Aorta (tissue), 5 donors: ENCODE measurements at regions of chr13 and their contacts with region 1.

Region 1: GRCh38 chr13:114226699-114227323 is 7.9 kb upstream of the CDC16 start:
- DNase-seq: peak; percentile 89 to 94
- ATAC-seq: peak; percentile 94
- H3K4me3 ChIP-seq: no peak overlapping the region
- H3K27ac ChIP-seq: no peak overlapping the region
- H3K4me1 ChIP-seq: no peaks in the 10 kb centered on the region
- H3K27me3 ChIP-seq: no peaks in the 10 kb centered on the region

Region 2: GRCh38 chr13:113951246-113951999 is 275.4 kb before region 1 on chr13:
- intact Hi-C with region 1: loop called (anchors 1 kb)
- DNase-seq: peak; percentile 93 to 96
- ATAC-seq: peak; percentile 92
- H3K4me3 ChIP-seq: no peak overlapping the region
- H3K27ac ChIP-seq: no peak overlapping the region
- H3K4me1 ChIP-seq: no peaks in the 10 kb centered on the region
- H3K27me3 ChIP-seq: no peaks in the 10 kb centered on the region